Activated CD4-positive, alpha-beta T cell treated with anti-CD3 and anti-CD28 coated beads, Interleukin-2, amount 10 ng/mL, durations not matched to agents 7 days and 5 days (primary cell): ENCODE measurements at regions of chr12 and their contacts with region 1.

Region 1: DNA sequence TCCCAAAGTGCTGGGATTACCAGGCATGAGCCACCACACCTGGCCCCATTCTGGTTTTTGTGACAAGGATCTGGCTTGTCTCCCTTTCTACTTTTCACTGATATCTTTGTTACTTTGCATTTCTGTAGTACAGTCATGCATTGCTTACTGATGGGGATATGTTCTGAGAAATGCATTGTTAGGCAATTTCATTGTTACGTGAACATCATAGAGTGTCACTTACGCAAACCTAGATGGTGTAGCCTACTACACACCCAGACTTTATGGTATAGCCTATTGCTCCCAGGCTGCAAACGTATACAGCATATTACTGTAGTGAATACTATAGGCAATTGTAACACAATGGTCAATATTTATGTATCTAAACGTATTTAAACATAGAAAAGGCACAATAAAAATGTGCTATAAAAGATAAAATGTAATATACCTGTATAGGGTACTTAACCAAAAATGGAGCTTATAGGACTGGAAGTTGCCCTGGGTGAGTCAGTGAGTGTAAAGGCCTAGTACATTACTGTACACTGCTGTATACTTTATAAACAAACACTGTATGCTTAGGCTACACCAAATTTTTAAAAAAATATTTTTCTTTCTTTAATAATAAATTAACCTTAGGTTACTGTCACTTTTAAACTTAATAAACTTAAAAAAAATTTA is 16.0 kb downstream of the MRPL42 start:
- DNase-seq: no peak
- H3K4me3 Mint-ChIP-seq: no peak overlapping the region
- H3K27ac Mint-ChIP-seq: no peak overlapping the region
- H3K4me1 Mint-ChIP-seq: no peaks in the 10 kb centered on the region
- H3K27me3 Mint-ChIP-seq: no peaks in the 10 kb centered on the region

Region 2: DNA sequence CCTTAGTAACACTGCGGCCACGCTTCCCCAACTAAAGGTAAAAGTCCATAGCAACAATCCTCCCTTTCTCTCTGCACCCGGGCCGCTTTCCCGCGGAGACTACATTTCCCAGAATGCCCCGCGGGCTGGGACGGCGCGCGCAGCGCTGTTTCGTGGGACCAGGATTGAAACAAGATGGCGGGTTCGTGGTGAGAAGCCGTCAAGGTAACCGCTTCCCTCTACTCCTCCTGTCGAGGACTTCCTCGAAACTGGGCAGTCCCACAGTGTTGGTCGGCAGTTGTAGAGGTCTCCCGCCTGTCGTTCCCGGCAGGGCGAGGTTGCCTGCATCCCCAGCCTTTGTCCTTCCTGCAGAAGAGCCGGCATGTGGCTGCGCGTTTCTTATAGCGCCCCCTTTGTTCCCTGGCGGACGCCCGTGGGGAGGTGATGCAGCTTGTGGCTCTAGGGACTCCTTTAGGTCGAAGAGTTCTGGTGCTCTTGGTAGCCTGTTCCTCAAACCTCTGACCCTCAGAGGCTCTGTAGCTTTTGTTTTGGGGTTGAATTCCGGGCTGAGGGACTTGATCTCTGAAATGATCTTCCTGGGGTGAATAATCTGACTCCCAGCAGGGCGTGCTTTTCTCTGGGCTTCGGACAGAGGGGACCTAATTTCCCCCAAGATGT is 15.8 kb before region 1 on chr12 and contains the start of gene MRPL42:
- CTCF ChIA-PET with region 1: interaction called, 10 read pairs
- POLR2A ChIA-PET with region 1: interaction called, 4 read pairs
- DNase-seq: peak; percentile 93
- H3K4me3 Mint-ChIP-seq: peak within 1 kb of the TSS; percentile 93
- H3K27ac Mint-ChIP-seq: peak within 1 kb of the TSS; percentile 90
- H3K4me1 Mint-ChIP-seq: peaks cover 36% of the 10 kb centered on the region
- H3K27me3 Mint-ChIP-seq: no peaks in the 10 kb centered on the region
- total RNA-seq, gene MRPL42: 55.6 to 69.0 TPM

Region 3: GRCh38 chr12:93509482-93509881 is 26.2 kb after region 1 on chr12:
- CTCF ChIA-PET with region 1: no interaction called
- POLR2A ChIA-PET with region 1: no interaction called
- DNase-seq: no peak
- H3K4me3 Mint-ChIP-seq: no peak overlapping the region
- H3K27ac Mint-ChIP-seq: no peak overlapping the region
- H3K4me1 Mint-ChIP-seq: peaks cover 21% of the 10 kb centered on the region
- H3K27me3 Mint-ChIP-seq: no peaks in the 10 kb centered on the region